Activated B cell treated with CpG ODN at 0.5 μM for 24 hours (primary cell): ENCODE measurements at regions of chr11 and their contacts with region 1.

Region 1: DNA sequence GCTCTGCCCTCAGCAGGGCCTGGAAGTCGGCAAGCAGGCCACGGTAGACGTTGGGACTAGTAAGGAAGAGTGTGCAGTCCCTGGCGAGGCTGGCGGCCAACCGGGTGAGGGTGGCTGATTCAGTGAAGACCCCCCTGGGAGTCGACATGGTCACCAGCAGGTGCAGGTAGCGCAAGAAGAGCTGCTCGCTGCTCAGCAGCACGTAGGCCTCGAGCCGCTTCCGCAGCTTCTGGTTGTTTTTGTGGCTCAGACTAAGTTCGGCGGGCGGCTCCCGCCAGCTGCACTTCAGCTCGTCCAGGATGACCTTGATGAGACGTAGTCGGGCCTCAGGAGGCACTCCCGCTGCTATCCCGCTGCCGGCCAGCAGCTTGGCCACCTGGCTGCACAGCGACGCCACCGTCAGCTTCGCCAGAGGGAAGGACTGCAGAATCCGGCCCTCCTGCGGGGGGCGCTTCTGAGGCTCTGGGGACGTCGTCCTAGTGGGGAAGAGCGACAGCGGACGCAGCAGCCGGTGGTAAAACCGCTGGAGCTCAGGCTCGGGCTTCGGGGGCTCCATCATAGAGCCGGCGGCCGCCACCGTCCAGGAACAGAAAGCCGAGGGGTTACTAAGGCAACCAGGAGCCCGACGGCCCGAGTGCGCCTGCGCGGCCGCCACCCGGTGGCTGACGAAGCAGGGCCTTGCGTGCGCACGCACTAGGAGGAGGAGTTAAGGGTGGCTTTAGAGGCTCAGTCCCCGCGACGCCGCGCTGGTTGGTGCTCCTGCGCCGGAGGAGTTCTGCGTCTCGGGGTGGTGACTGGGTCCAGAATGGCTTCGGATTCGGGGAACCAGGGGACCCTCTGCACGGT is at the starts of genes CCDC87 and CCS:
- DNase-seq: peak; percentile 98
- ATAC-seq: peak; percentile 97
- H3K4me3 Mint-ChIP-seq: peak within 1 kb of the TSS; percentile 100
- H3K27ac Mint-ChIP-seq: peak within 1 kb of the TSS; percentile 99
- H3K4me1 Mint-ChIP-seq: peaks cover 36% of the 10 kb centered on the region
- H3K27me3 Mint-ChIP-seq: no peaks in the 10 kb centered on the region
- CTCF ChIP-seq: no peak
- total RNA-seq, gene CCDC87: 0.22 and 0.31 TPM in 2 replicates
- total RNA-seq, gene CCS: 59.0 and 65.3 TPM in 2 replicates

Region 2: DNA sequence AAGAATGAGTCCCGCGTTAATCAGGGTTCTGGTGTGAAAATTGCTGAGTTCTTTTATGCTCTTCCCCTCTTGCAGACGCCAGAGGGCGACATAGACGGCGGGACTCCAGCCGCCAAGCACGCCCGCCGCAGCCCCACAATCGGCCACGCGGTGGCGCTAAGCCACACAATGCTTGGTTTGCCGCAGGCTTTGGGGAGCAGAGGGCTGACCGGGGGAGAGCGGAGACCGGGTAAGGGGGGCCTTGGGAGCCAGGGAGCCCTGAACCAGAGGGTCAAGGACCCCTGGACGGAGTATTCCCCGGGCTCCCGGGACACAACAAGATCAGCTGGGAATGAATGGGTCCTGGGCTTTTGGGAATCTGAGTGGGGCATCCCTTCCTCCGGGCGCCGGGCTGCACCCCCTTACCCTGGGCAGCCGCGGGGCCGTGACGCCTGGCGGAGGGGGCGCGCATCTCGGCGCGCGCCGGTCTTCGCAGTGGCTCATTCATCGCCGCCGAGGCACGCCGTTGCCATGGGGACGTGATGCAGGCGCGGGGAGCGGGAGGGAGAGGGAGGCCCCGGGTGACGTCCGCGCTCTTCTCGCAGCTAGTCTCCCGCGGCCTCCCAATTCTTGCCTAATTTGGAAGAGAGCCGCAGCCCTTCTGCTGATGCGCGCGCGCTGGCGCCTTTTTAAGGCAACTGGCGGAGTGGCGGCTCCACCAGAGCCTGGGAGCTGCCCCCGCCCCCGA is 184.0 kb before region 1 on chr11:
- CTCF ChIA-PET with region 1: no interaction called
- POLR2A ChIA-PET with region 1: no interaction called
- intact Hi-C with region 1: no loop called
- DNase-seq: peak; percentile 88
- ATAC-seq: peak; percentile 92
- H3K4me3 Mint-ChIP-seq: peak overlapping the region; percentile 73
- H3K27ac Mint-ChIP-seq: no peak overlapping the region
- H3K4me1 Mint-ChIP-seq: peaks cover 4% of the 10 kb centered on the region
- H3K27me3 Mint-ChIP-seq: peaks cover 44% of the 10 kb centered on the region
- CTCF ChIP-seq: peak; percentile 96

Region 3: DNA sequence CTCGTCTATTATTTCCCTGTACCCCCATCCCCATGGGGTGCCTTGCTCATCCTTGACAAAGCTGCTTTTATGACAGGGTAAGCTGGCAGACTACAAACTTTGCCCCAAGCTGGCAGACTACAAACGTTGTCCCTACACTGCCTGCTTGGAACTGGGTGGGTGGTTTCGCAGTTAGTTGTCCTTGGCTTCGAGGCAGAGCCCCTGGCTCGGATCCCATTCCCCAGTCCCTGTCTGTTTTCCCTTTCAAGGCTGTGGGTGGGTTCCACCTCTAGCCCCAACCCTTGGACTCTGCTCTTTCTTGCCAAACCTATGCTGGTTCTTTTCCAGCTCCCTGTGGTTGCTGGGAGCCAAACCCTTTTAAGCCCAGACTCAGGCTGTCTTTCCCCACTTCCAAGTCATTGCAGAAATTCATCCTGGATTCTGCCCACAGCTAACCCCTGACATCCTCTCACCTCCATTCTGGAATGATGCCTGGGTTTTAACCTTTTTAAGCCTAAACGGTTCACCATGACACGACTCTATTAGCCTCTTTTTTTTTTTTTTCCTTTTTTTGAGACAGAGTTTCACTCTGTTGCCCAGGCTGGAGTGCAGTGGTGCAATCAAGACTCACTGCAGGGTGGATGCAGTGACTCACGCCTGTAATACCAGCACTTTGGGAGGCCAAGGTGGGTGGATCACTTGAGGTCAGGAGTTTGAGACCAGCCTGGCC is 14.6 kb after region 1 on chr11:
- CTCF ChIA-PET with region 1: interaction called, 4 read pairs
- POLR2A ChIA-PET with region 1: interaction called, 10 read pairs
- intact Hi-C with region 1: no loop called
- DNase-seq: no peak
- ATAC-seq: no peak
- H3K4me3 Mint-ChIP-seq: no peak overlapping the region
- H3K27ac Mint-ChIP-seq: peak overlapping the region; percentile 80
- H3K4me1 Mint-ChIP-seq: peaks cover 42% of the 10 kb centered on the region
- H3K27me3 Mint-ChIP-seq: no peaks in the 10 kb centered on the region
- CTCF ChIP-seq: no peak